Activated T-helper 1 cell treated with anti-CD3 and anti-CD28 coated beads, Interleukin-12 subunit alpha, Interleukin-12 subunit beta, Interleukin-2, Interleukin-4 antibody, amounts not matched to agents 30 ng/mL and 10 ng/mL and 1 ng/mL, durations not matched to agents 14 hours and 24 hours and 36 hours (primary cell): ENCODE measurements at regions of chr4 and their contacts with region 1.

Region 1: DNA sequence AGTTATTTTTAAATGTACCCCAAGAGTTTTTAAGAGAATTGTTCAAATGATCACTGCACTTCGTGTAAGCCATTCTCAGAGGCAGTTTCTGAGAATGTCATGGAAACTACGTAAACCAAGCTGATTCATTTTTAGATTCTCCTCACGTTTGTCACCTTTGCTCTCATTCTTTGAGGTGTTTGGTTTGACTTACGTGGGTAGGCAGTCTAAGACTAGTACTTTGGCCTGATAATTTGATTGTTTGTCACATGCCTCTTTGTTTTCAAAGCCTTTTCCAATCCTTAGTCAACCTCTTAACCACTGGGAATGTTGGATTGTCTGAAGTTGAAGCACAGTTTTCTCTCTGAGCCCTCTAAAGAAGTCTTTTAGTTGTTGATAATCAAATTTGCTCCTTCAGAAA is 10.5 kb downstream of the SEPTIN11 start:
- DNase-seq: no peak
- H3K4me3 Mint-ChIP-seq: no peak overlapping the region
- H3K27ac Mint-ChIP-seq: no peak overlapping the region
- H3K4me1 Mint-ChIP-seq: peaks cover 18% of the 10 kb centered on the region
- H3K27me3 Mint-ChIP-seq: peaks cover 50% of the 10 kb centered on the region

Region 2: DNA sequence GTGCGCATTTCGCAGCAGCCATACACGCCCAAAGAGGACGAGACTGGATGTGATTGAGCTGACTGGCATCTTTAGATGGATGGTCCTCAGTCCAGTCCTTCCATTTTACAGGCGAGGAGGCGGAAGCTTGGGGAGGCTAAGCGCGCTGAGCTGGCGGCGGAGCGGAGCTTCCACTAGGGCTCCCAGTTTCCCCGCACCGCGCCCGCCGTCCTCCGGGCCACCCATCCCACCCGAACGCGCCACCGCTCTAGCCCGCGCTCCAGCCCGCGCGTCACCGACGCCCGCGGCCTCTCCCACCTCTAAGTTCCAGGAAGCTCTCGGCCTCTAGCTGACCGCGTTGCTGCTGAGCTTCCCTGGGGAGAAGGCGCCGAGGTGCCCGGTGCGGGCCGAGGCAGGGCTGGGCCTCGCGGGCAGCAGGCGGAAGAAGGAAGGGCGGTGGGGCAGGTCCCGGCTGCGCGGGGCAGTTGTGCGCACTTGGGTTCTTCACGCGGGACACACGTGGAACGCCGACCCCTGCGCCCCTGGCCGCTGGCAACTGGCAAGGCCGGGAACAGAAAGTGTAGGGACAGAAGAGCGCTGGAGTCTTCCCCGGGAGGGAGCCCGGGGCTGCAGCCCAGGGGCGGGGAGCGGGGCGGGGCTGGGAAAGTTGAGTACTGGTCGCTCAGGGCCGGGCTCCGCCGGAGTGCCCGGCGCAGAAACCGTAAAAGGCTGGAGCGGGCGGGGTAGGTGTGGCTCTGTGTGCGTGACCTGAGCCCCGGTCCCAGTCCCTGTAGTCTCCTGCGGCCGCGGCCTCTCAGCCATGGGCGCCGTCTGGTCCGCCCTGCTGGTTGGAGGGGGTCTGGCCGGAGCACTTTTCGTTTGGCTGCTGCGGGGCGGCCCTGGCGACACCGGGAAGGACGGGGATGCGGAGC is 653.8 kb before region 1 on chr4 and contains the start of gene STBD1:
- intact Hi-C with region 1: loop called (anchors 1 kb)
- DNase-seq: peak; percentile 24
- H3K4me3 Mint-ChIP-seq: peak within 1 kb of the TSS; percentile 68
- H3K27ac Mint-ChIP-seq: peak within 1 kb of the TSS; percentile 24
- H3K4me1 Mint-ChIP-seq: peaks cover 48% of the 10 kb centered on the region
- H3K27me3 Mint-ChIP-seq: peaks cover 16% of the 10 kb centered on the region
- total RNA-seq, gene STBD1: 0.51 and 0.57 TPM in 2 replicates

Region 3: GRCh38 chr4:76447393-76447851 is 512.6 kb before region 1 on chr4:
- intact Hi-C with region 1: no loop called
- DNase-seq: no peak
- H3K4me3 Mint-ChIP-seq: no peak overlapping the region
- H3K27ac Mint-ChIP-seq: no peak overlapping the region
- H3K4me1 Mint-ChIP-seq: no peaks in the 10 kb centered on the region
- H3K27me3 Mint-ChIP-seq: peaks cover 3% of the 10 kb centered on the region

Region 4: DNA sequence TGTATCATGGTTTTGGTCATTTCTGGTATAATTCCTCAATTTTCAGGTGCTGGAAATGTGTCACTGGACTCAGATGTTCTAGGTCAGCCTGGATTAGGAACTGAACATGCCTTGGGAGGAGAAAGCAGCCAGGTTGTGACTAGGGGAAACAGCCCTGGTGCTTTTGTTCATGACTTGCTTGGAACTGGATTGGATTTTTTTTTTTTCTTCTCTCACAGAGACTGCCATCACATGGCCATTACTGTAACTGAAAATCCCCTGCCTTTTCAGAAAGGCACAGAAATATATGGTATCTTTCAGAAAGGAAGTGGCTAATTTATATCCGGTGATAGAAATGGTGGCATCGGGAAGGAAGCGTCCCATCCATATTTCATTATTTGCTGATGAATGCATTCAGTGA is 24.1 kb after region 1 on chr4:
- intact Hi-C with region 1: loop called (anchors 1 kb)
- DNase-seq: no peak
- H3K4me3 Mint-ChIP-seq: peak overlapping the region; percentile 13
- H3K27ac Mint-ChIP-seq: peak overlapping the region; percentile 5
- H3K4me1 Mint-ChIP-seq: peaks cover 63% of the 10 kb centered on the region
- H3K27me3 Mint-ChIP-seq: peaks cover 20% of the 10 kb centered on the region